Cardiac septum (tissue), 1 donor: ENCODE measurements at regions of chr1 and their contacts with region 1.

Region 1: DNA sequence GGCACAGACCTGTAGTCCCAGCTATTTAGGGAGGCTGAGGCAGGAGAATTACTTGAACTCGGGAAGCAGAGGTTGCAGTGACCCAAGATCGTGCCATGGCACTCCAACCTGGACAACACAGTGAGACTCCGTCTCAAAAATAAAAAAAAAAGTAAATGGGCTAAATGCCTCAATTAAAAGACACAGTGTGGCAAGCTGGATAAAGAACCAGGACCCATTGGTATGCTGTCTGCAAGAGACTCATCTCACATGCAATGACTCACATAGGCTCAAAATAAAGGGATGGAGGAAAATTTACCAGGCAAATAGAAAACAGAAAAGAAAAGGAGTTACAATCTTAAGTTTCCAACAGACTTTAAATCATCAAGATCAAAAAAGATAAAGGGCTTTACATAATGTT is 40.3 kb downstream of the ACBD6 start:
- DNase-seq: no peak

Region 2: DNA sequence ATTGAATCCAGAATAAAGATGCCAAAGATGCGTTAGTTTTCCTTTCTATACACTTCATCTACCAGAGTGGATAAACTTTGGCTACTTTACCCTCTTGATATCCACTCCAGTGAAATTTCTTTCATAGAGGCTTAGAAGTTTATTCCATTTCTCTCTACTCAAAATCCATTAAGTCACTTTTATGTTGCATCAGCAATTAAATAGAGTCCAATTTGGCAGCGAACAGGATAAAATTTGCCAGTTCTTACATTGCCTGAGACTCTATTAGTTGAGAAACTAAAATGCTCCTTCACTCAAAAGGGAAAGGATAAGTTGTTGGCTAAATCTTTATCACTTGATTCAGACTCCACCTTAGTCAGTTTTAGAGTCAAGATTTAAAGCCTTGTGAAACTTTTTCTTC is 17.6 kb before region 1 on chr1:
- intact Hi-C with region 1: loop called (anchors 1 kb)
- DNase-seq: no peak